GM18951 (cell line): ENCODE measurements at regions of chr21 and their contacts with region 1.

Region 1: GRCh38 chr21:32403201-32403777 is 9.2 kb upstream of the EVA1C start:
- POLR2A ChIP-seq: no peak

Region 2: GRCh38 chr21:32340863-32341848 is 62.1 kb before region 1 on chr21:
- in situ Hi-C with region 1: no loop called
- POLR2A ChIP-seq: no peak

Region 3: DNA sequence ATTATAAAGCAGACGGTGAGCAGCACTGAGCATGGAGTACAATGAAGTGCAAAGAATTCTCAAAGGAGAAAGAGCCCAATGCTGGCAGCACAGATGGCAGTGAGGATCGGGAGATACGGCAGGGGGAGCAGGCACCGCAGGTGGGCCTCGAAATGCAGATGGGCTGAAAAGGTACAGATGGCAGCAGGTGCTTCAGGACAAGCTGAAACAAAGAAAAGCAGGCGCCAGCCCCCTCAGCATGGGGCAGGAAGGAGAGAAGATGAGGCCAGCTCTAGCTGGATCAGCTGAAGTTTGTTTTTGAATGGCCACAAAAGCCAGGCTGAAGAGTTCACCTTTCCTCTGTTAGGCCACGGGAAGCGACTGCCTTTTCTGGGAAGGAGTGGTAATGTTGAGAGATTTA is 201.2 kb after region 1 on chr21:
- in situ Hi-C with region 1: loop called (anchors 10 kb)
- POLR2A ChIP-seq: no peak